ENCODE measurements at regions of chr7 and their contacts with region 1.

Region 1: DNA sequence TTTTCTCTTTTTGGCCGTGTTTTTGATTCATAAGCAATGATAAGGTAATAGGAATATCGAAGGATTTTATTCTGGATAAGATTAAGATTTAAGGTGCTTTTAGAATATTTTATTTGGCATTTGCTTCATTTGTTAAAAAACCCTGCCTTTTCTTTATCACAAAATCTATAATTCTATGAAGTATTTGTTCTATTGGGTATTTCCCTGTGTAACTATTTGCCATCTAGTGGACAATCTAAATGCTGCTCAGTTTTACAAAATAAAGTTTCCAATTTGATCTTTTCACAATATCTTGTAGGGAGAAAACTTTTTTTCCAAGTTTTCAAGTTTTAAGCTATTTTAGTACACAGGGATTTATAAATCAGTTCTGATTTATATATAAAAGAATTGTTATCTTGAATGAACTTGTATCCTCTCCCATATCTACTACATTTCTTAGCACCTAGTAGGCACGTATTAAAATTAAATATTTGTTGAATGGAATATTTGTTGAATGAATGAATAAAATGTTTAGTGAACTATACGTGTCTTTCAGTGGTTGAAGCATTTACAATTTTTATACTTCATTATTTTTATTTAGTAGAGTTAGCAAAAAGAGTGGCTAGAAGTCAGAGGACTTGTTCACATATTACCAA is 26.5 kb downstream of the ANKRD7 start:
- DNase-seq: no peak
- ATAC-seq: no peak
- H3K4me3 ChIP-seq: no peak overlapping the region
- H3K4me3 Mint-ChIP-seq: no peak overlapping the region
- H3K27ac ChIP-seq: no peak overlapping the region
- H3K27ac Mint-ChIP-seq: no peak overlapping the region
- H3K4me1 ChIP-seq: no peaks in the 10 kb centered on the region
- H3K4me1 Mint-ChIP-seq: no peaks in the 10 kb centered on the region
- H3K27me3 ChIP-seq: no peaks in the 10 kb centered on the region
- H3K27me3 Mint-ChIP-seq: peaks cover 7% of the 10 kb centered on the region
- CTCF ChIP-seq: no peak

Region 2: DNA sequence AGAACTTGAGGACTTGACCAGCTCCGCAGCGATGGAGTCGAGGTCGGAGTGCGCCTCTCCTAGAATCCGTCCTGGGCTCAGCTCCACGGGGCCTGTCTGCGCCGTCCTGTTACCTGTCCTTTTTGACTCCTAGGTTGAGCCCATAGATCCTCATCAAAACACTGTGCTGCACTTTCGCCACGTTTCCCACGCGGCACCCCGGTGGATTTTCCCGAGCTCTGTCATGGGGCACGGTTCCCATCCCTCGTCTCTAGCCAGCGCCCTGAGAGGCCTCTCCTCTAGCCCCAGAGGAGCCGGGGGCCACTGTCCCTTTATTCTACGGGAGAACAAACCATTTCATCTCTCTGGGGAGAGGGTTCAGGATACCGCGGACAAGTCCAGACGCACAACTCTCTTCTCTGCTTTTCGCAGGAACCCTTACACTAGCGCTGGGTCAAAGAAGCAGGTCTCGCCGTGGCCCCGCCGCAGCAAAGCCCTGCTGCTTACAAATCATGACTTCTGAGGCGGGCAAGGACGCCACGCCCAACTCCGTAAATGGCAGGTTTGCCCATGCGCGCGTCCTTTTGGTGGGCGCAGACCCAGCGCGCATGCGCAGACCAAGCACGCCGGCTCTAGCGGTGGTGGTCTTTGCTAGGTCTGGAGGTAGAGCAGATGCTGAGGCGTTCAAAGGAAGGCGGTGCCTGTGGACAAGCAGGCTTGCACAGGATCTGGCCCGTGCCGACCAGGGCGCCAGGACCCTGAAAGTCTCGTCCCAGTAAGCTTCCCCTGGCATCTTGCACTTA is 36.7 kb before region 1 on chr7:
- CTCF ChIA-PET with region 1: no interaction called
- POLR2A ChIA-PET with region 1: no interaction called
- intact Hi-C with region 1: no loop called
- DNase-seq: peak; percentile 63 to 91 (median 81)
- ATAC-seq: peak; percentile 96
- H3K4me3 ChIP-seq: peak overlapping the region; percentile 55 to 58
- H3K4me3 Mint-ChIP-seq: peak overlapping the region; percentile 94
- H3K27ac ChIP-seq: peak overlapping the region in 1 of 2 experiments; percentile 31
- H3K27ac Mint-ChIP-seq: peak overlapping the region; percentile 87
- H3K4me1 ChIP-seq: peaks cover 5% of the 10 kb centered on the region
- H3K4me1 Mint-ChIP-seq: peaks cover 18% of the 10 kb centered on the region
- H3K27me3 ChIP-seq: no peaks in the 10 kb centered on the region
- H3K27me3 Mint-ChIP-seq: peaks cover 2% of the 10 kb centered on the region
- CTCF ChIP-seq: no peak

Region 3: GRCh38 chr7:118755067-118755625 is 504.2 kb after region 1 on chr7:
- CTCF ChIA-PET with region 1: no interaction called
- POLR2A ChIA-PET with region 1: no interaction called
- intact Hi-C with region 1: loop called in 1 of 2 experiments (anchors 10 kb)
- DNase-seq: no peak
- ATAC-seq: no peak
- H3K4me3 ChIP-seq: no peak overlapping the region
- H3K4me3 Mint-ChIP-seq: no peak overlapping the region
- H3K27ac ChIP-seq: no peak overlapping the region
- H3K27ac Mint-ChIP-seq: no peak overlapping the region
- H3K4me1 ChIP-seq: no peaks in the 10 kb centered on the region
- H3K4me1 Mint-ChIP-seq: no peaks in the 10 kb centered on the region
- H3K27me3 ChIP-seq: no peaks in the 10 kb centered on the region
- H3K27me3 Mint-ChIP-seq: no peaks in the 10 kb centered on the region
- CTCF ChIP-seq: no peak